PC-9 (cell line): ENCODE measurements at regions of chr14 and their contacts with region 1.

Region 1: GRCh38 chr14:65179918-65180724 is 77.8 kb upstream of the MAX start:
- DNase-seq: peak; percentile 79 to 87
- H3K4me3 ChIP-seq: no peak overlapping the region
- H3K27ac ChIP-seq: peak overlapping the region; percentile 36
- H3K4me1 ChIP-seq: peaks cover 30% of the 10 kb centered on the region
- H3K27me3 ChIP-seq: no peaks in the 10 kb centered on the region
- CTCF ChIP-seq: no peak

Region 2: DNA sequence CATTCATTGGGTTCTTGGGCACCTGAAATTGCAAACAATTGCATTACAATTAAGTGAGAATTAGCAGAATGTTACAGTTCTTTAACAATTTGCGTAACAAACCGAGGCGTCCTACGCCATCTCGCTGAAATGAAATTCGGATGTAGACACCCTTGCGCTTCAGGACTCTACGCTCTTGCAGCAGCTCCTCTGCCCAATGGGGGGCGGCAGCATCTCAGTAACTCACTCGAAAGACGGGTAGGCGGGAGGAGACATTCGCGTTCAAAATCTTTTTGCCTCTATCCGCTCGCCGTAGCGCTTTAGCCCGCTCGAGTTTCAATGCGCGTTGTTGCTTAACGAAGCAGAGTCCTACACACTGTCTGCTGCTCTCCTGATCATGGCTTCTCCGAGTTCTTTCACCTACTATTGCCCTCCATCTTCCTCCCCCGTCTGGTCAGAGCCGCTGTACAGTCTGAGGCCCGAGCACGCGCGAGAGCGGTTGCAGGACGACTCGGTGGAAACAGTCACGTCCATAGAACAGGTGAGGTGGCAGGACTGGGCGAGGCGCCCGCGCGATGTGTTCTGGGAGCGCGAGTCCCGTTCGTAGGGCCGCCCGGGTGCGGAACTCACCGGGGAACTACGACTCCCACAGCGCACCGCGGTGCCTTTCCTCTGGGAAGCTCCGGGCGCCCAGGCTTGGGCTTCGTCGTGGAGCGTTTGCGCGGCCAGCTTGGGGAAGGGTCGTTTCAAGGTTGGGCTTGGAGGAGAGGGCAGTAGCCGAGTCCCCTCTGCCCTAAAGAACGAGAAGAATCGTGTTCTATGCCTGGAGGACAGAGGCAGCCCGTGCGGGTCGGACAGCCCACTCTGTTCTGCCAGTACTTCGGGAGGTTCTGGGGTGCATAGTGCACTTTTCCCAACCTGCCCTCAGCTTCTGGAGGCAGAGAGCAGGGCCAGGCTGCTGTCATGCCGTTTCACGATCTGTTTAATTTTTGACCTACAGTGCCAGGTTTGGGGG is 193.2 kb before region 1 on chr14 and contains the start of gene FNTB:
- CTCF ChIA-PET with region 1: no interaction called
- POLR2A ChIA-PET with region 1: no interaction called
- intact Hi-C with region 1: no loop called
- DNase-seq: peak; percentile 93 to 96
- H3K4me3 ChIP-seq: peak within 1 kb of the TSS; percentile 86
- H3K27ac ChIP-seq: peak within 1 kb of the TSS; percentile 77
- H3K4me1 ChIP-seq: peaks cover 21% of the 10 kb centered on the region
- H3K27me3 ChIP-seq: no peaks in the 10 kb centered on the region
- CTCF ChIP-seq: peak; percentile 61; the same call in 1 of the 2 replicates
- total RNA-seq, gene FNTB: 23.5 and 35.3 TPM in 2 replicates

Region 3: DNA sequence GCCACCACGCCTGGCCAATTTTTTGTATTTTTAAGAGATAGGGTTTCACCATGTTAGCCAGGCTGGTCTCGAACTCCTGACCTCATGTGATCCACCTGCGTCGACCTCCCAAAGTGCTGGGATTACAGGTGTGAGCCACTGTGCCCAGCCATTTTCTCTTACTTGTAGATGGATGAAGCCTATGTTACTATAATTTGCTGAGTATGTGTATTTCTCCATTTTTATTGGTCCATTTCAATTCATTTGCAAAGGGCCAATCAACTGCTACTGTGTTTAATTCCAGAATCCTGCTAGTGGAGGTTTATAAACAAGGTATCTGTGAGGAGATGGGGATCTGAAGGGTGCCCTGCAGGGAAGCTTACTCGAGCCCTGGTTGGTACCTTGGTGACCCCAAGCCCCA is 23.9 kb after region 1 on chr14:
- CTCF ChIA-PET with region 1: no interaction called
- POLR2A ChIA-PET with region 1: no interaction called
- intact Hi-C with region 1: loop called (anchors 2 kb)
- DNase-seq: no peak
- H3K4me3 ChIP-seq: no peak overlapping the region
- H3K27ac ChIP-seq: no peak overlapping the region
- H3K4me1 ChIP-seq: peaks cover 10% of the 10 kb centered on the region; the same call in 1 of the 2 replicates
- H3K27me3 ChIP-seq: no peaks in the 10 kb centered on the region
- CTCF ChIP-seq: no peak

Region 4: DNA sequence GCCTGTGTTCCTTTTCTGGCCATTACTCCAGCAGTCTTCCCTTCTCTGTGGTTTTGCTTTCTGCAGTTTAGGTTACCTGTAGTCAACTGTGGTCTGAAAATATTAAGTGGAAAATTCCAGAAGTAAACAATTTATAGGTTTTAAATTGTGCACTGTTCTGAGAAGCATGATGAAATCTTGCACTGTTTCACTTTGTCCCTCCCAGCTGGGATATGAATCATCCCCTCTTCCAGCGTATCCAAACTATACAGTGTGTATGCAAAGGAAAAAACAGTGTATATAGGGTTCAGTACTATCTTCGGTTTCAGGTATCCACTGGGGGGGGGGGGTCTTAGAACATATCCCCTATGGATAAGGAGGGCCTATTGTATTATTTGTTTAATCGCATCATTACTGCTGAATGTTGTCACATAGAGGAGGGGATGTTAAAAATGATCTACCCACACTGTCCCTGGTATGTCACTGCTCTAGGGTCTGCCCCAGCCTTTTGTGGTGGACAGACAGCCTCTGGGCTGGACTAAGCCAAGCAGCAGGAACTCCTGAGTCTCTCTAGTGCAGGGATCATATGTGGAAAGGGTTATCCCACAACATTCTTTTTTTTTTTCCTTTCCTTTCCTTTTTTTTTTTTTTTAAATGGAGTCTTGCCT is 31.3 kb after region 1 on chr14:
- CTCF ChIA-PET with region 1: no interaction called
- POLR2A ChIA-PET with region 1: no interaction called
- intact Hi-C with region 1: loop called (anchors 1 kb)
- DNase-seq: peak in 1 of 2 experiments; percentile 83
- H3K4me3 ChIP-seq: peak overlapping the region; percentile 17; the same call in 1 of the 2 replicates
- H3K27ac ChIP-seq: peak overlapping the region; percentile 93
- H3K4me1 ChIP-seq: peaks cover 34% of the 10 kb centered on the region
- H3K27me3 ChIP-seq: no peaks in the 10 kb centered on the region
- CTCF ChIP-seq: no peak